Dendritic cell treated with granulocyte-macrophage colony-stimulating factor and Interleukin-4, amounts not matched to agents 40 ng/mL and 50 ng/mL, for 4 days (primary cell): ENCODE measurements at regions of chr22 and their contacts with region 1.

Region 1: GRCh38 chr22:28855355-28856094 is 27.8 kb upstream of the ZNRF3 start:
- H3K4me3 Mint-ChIP-seq: no peak overlapping the region
- H3K27ac Mint-ChIP-seq: no peak overlapping the region
- H3K4me1 Mint-ChIP-seq: no peaks in the 10 kb centered on the region
- H3K27me3 Mint-ChIP-seq: peaks cover 5% of the 10 kb centered on the region

Region 2: DNA sequence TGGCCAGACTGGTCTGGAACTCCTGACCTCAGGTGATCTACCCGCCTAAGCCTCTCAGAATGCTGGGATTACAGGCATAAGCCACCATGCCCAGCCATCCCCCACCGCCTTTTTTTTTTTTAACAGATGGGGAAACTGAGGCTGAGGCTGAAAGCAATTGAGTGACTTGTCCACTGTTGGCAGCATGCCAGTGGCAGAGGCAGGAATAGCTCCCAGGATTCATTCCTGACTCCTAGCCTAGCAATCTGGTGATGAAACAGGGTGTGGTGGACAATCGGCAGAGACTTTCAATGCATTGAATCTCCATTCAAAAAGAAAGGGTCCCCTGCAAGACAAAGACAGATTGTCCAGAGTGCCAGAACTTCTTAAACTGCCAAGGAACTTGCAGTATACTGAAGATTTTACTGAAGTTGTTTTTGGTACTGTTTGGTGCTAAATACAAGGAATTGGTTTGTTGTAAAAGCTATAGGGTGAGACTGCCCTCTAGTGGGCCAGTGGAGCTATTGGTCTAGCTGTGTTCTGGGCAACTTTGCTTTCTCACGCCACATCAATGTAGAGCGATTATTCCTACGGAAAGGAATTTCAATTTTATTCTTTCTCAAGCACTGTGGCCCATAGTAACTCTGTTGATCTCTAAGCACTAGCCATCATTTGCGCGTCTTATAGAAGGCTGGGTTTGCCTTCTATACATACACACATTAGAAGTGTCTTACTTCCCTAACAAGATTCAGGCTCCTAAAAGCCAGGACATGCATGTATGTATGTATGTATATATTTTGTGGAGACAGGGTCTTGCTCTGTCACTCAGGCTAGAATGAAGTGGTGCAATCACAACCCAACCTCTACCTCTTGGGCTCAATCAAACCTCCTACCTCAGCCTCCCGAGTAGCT is 185.1 kb after region 1 on chr22:
- intact Hi-C with region 1: loop called (anchors 1 kb)
- H3K4me3 Mint-ChIP-seq: no peak overlapping the region
- H3K27ac Mint-ChIP-seq: no peak overlapping the region
- H3K4me1 Mint-ChIP-seq: no peaks in the 10 kb centered on the region
- H3K27me3 Mint-ChIP-seq: no peaks in the 10 kb centered on the region

Region 3: GRCh38 chr22:29245637-29246385 is 390.3 kb after region 1 on chr22:
- intact Hi-C with region 1: loop called (anchors 2 kb)
- H3K4me3 Mint-ChIP-seq: no peak overlapping the region
- H3K27ac Mint-ChIP-seq: no peak overlapping the region
- H3K4me1 Mint-ChIP-seq: no peaks in the 10 kb centered on the region
- H3K27me3 Mint-ChIP-seq: no peaks in the 10 kb centered on the region